A549 (cell line): ENCODE measurements at regions of chr2 and their contacts with region 1.

Region 1: GRCh38 chr2:26605195-26605998 is 35.8 kb downstream of the CIB4 start:
- DNase-seq: peak; percentile 73 to 78
- ATAC-seq: peak; percentile 79 to 93
- H3K4me3 ChIP-seq: no peak overlapping the region
- H3K27ac ChIP-seq: peak overlapping the region; percentile 57 to 80; a peak in 5 of 6 replicates
- H3K4me1 ChIP-seq: peaks cover 21% of the 10 kb centered on the region
- CTCF ChIP-seq: peak; percentile 97
- EP300 ChIP-seq: no peak
- POLR2A ChIP-seq: no peak
- RAD21 ChIP-seq: peak; percentile 99

Region 2: GRCh38 chr2:26363323-26363722 is 242.1 kb before region 1 on chr2:
- CTCF ChIA-PET with region 1: no interaction called
- POLR2A ChIA-PET with region 1: no interaction called
- DNase-seq: no peak
- ATAC-seq: peak in 1 of 2 experiments; percentile 49; a peak in 3 of 6 replicates
- H3K4me3 ChIP-seq: no peak overlapping the region
- H3K27ac ChIP-seq: no peak overlapping the region
- H3K4me1 ChIP-seq: peaks cover 8% of the 10 kb centered on the region; the same call in 2 of the 3 replicates
- CTCF ChIP-seq: no peak
- EP300 ChIP-seq: no peak
- POLR2A ChIP-seq: no peak
- RAD21 ChIP-seq: no peak

Region 3: DNA sequence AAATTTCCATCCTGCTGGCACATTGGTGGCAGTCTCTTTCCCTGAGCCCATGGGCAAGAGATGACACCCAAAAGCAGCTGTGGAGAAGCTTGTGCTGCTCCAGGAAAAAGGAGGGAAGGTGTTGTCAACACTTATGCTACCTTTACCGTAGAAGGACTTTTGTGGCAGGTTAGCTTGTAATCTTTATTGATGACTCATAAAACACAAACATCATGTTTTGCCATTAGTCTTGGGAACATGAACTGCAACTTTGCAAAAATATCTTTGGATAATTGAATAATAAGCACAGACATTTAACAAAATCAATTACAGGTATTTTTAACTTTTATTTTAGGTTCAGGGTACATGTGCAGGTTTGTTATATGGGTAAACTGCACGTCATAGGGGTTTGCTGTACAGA is 170.3 kb before region 1 on chr2:
- CTCF ChIA-PET with region 1: no interaction called
- POLR2A ChIA-PET with region 1: no interaction called
- DNase-seq: no peak
- ATAC-seq: no peak
- H3K4me3 ChIP-seq: no peak overlapping the region
- H3K27ac ChIP-seq: no peak overlapping the region
- H3K4me1 ChIP-seq: no peaks in the 10 kb centered on the region
- CTCF ChIP-seq: no peak
- EP300 ChIP-seq: no peak
- POLR2A ChIP-seq: no peak
- RAD21 ChIP-seq: no peak

Region 4: DNA sequence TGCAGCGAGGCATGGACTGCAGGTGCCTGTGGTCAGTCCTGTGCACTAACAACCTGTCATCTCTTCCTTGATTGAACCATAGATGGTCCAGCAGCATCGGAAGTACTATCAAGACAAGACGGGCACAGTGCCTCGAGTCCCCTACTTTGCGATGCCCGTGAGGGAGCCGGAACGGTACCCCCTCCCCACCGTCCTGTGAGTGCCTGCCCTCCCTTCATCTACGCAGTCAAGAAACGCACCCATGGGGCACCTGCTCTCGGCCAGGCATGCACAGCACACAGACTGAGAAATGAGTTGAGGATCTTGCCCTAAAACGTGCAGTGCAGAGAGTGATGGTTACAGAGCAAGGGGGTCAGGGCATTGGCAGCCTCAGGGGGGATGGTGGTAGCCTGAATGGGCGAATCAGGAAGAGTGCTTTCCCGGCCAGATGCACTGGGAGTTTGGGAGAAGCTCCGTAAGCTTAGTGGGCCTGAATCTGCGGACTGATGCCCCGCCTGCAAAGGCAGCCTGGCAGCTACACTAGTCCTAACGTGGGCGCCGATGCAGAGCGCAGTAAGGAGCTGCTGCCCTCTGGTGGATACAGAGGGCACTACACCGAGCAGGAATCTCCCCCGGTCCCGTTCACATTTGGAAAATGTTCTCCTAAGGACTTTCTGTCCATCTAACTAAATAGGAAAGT is 27.8 kb before region 1 on chr2:
- CTCF ChIA-PET with region 1: interaction called, 34 read pairs
- POLR2A ChIA-PET with region 1: no interaction called
- DNase-seq: peak; percentile 71 to 95
- ATAC-seq: peak; percentile 73 to 93
- H3K4me3 ChIP-seq: no peak overlapping the region
- H3K27ac ChIP-seq: peak overlapping the region in 1 of 2 experiments; percentile 47; a peak in 3 of 6 replicates
- H3K4me1 ChIP-seq: peaks cover 4% of the 10 kb centered on the region; the same call in 2 of the 3 replicates
- CTCF ChIP-seq: peak; percentile 98
- EP300 ChIP-seq: no peak
- POLR2A ChIP-seq: no peak
- RAD21 ChIP-seq: peak; percentile 93 to 96

Region 5: DNA sequence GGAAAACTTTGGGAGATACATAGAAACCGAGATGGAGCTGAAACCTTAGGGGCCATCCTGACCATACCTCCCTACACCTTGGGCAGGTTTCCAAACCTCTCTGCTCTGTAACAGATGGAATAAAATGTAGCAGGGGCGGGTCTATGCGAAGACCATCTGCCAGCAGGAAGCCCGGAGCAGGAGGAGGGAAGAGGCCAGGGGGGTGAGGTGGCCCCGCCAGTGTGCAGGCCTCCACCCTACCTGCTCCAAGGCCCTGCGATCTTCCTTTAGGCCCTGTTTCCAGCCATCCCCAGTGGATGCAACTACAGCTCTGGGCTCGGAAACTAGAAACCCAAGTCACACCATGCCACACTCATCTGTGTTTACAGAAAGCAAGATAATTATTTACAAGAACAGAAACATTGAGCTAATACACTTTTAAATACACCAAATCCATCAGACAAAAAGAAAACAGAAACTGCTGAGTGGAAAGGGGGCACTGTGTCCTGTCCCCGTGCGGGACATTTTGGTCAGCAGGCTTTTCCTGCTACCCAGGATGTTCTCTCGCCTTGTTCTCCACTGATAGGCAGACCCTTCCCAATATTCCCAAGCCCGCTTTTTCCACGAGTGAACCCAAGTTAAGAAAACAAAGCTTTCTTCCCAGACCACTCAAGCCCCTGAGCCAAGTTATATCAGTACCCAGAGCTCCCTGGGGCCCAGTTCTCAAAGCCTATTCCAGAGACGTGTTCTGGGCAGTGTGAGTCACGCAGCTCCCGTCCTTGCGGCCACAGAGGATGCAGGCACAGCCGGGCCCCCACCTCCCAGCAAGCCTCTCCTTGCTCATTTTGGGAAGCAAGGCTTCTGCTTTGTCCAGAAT is 18.4 kb after region 1 on chr2:
- CTCF ChIA-PET with region 1: interaction called, 83 read pairs
- POLR2A ChIA-PET with region 1: no interaction called
- DNase-seq: no peak
- ATAC-seq: peak; percentile 17 to 32; a peak in 2 of 6 replicates
- H3K4me3 ChIP-seq: no peak overlapping the region
- H3K27ac ChIP-seq: peak overlapping the region in 1 of 2 experiments; percentile 47; a peak in 3 of 6 replicates
- H3K4me1 ChIP-seq: peaks cover 7% of the 10 kb centered on the region; the same call in 2 of the 3 replicates
- CTCF ChIP-seq: no peak
- EP300 ChIP-seq: no peak
- POLR2A ChIP-seq: no peak
- RAD21 ChIP-seq: no peak

Region 6: GRCh38 chr2:26652361-26653041 is 47.1 kb after region 1 on chr2:
- CTCF ChIA-PET with region 1: interaction called, 39 read pairs
- POLR2A ChIA-PET with region 1: no interaction called
- DNase-seq: no peak
- ATAC-seq: no peak
- H3K4me3 ChIP-seq: no peak overlapping the region
- H3K27ac ChIP-seq: peak overlapping the region in 1 of 2 experiments; percentile 36; a peak in 2 of 6 replicates
- H3K4me1 ChIP-seq: no peaks in the 10 kb centered on the region
- CTCF ChIP-seq: no peak
- EP300 ChIP-seq: no peak
- POLR2A ChIP-seq: no peak
- RAD21 ChIP-seq: no peak

Region 7: DNA sequence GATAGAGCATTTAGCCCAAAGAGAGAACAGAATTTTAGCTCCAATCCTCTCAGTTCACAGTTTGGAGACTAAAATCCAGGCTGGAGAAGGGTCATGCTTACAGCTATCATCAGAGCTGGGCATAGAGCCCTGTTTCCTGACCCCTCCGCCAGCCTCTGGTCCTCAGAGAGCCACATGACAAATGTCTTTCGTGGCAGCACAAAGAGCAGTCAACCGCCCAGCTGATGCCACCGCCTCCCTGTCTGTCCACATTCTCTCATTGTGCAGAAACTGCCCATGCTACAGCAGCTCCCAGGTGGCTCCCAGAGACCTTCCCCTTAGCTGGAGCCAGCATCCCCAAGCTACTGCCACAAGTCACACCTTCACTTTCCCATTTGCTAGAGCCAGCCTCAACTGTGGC is 94.7 kb after region 1 on chr2:
- CTCF ChIA-PET with region 1: interaction called, 17 read pairs
- POLR2A ChIA-PET with region 1: no interaction called
- DNase-seq: no peak
- ATAC-seq: no peak
- H3K4me3 ChIP-seq: no peak overlapping the region
- H3K27ac ChIP-seq: peak overlapping the region in 1 of 2 experiments; percentile 30; a peak in 1 of 6 replicates
- H3K4me1 ChIP-seq: peaks cover 18% of the 10 kb centered on the region
- CTCF ChIP-seq: no peak
- EP300 ChIP-seq: no peak
- POLR2A ChIP-seq: no peak
- RAD21 ChIP-seq: no peak

Region 8: GRCh38 chr2:26757873-26758789 is 152.7 kb after region 1 on chr2:
- CTCF ChIA-PET with region 1: interaction called, 72 read pairs
- POLR2A ChIA-PET with region 1: no interaction called
- DNase-seq: peak; percentile 70 to 98
- ATAC-seq: peak; percentile 70 to 91
- H3K4me3 ChIP-seq: no peak overlapping the region
- H3K27ac ChIP-seq: peak overlapping the region; percentile 97
- H3K4me1 ChIP-seq: peaks cover 57% of the 10 kb centered on the region
- CTCF ChIP-seq: no peak
- EP300 ChIP-seq: peak; percentile 86 to 94
- POLR2A ChIP-seq: no peak
- RAD21 ChIP-seq: peak; percentile 29 to 32; a peak in 1 of 5 replicates

Region 9: GRCh38 chr2:26892922-26893524 is 287.6 kb after region 1 on chr2:
- CTCF ChIA-PET with region 1: no interaction called
- POLR2A ChIA-PET with region 1: no interaction called
- DNase-seq: no peak
- ATAC-seq: peak; percentile 22 to 39; a peak in 1 of 6 replicates
- H3K4me3 ChIP-seq: no peak overlapping the region
- H3K27ac ChIP-seq: no peak overlapping the region
- H3K4me1 ChIP-seq: no peaks in the 10 kb centered on the region
- CTCF ChIP-seq: no peak
- EP300 ChIP-seq: no peak
- POLR2A ChIP-seq: no peak
- RAD21 ChIP-seq: no peak